ENCODE measurements at regions of chr16 and their contacts with region 1.

Region 1: GRCh38 chr16:57167953-57168352 is 17.9 kb downstream of the PSME3IP1 start:
- ATAC-seq: peak; percentile 41 to 82 (median 54)
- H3K4me3 ChIP-seq: no peak overlapping the region
- H3K27ac ChIP-seq: no peak overlapping the region
- H3K4me1 ChIP-seq: peaks cover 0 to 4% of the 10 kb centered on the region in 2 donors

Region 2: GRCh38 chr16:56866943-56867830 is 300.8 kb before region 1 on chr16:
- in situ Hi-C with region 1: loop called in 1 of 9 experiments (anchors 25 kb)
- ATAC-seq: peak in 4 of 8 experiments; percentile 13 to 47 (median 34)
- H3K4me3 ChIP-seq: no peak overlapping the region
- H3K27ac ChIP-seq: no peak overlapping the region
- H3K4me1 ChIP-seq: peaks cover 0 to 13% of the 10 kb centered on the region in 2 donors

Region 3: GRCh38 chr16:57071831-57072582 is 95.9 kb before region 1 on chr16:
- in situ Hi-C with region 1: loop called in 1 of 9 experiments (anchors 10 kb)
- ATAC-seq: peak in 2 of 8 experiments; percentile 77 to 82
- H3K4me3 ChIP-seq: no peak overlapping the region
- H3K27ac ChIP-seq: no peak overlapping the region
- H3K4me1 ChIP-seq: no peaks in the 10 kb centered on the region